Sciatic nerve (tissue), 2 donors: ENCODE measurements at regions of chr1 and their contacts with region 1.

Region 1: DNA sequence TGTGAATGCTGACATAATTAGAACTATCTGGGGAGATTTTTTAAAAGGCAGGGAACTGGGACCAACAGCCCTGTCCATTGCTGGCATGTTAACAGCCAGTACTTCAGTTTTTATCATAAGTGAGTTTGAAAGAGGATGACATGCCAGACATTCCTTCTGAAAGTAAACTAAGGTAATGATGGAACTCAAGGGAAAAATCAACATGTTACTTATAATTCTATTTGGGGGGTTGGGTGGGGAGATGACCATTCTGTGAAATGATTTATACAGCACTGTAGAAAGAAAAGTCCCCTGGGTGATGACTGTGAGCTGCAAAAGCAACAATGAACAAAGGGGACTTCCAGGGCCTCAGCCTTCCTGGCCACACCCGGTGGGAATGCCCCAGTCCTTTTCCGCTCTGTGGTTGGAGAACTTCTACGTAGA is 5.4 kb upstream of the LAMC2 start:
- DNase-seq: peak; percentile 66
- ATAC-seq: peak; percentile 91

Region 2: GRCh38 chr1:183477986-183478781 is 297.5 kb after region 1 on chr1:
- intact Hi-C with region 1: loop called (anchors 5 kb)
- DNase-seq: no peak
- ATAC-seq: no peak